CD4-positive, alpha-beta memory T cell (primary cell): ENCODE measurements at regions of chrX and their contacts with region 1.

Region 1: DNA sequence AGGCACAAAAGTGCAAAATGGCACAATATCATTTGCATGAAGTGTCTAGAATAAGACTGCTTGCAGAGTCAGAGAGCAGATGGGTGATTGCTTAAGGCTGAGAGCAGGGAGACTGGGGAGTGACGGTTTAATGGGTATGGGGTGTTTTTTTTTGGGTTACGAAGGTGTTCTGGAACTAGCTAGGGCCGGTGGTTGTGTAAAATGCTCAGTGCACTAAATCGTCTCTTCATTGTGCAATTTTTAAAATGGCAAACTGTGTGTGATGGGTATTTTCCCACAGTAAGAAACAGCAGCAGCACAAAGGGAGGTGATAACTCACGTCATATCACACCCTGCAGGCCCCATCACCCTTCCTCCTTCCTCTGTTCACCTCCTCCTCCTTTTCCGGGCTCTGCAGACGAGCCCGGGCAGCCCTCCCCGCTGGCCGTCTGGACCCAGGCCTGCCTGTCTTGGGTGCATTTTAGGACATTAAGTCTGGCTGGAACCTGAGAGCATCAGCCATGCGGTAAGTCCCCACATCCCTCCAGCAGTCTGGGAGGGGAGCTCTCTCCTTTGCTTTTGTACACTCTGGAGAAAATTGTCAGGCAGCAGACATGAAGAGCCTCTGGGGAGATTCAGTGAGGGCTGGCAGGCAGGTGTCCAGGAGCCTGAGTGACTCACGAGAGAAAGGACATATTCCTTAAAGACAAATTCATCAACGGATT is 42.7 kb downstream of the ASMT start:
- DNase-seq: peak; percentile 46 to 86 (median 64)
- H3K4me3 ChIP-seq: peak overlapping the region; percentile 77 to 89
- H3K4me3 Mint-ChIP-seq: peak overlapping the region; percentile 93 to 98 (median 94)
- H3K27ac ChIP-seq: peak overlapping the region; percentile 82
- H3K27ac Mint-ChIP-seq: peak overlapping the region; percentile 86 to 99 (median 96)
- H3K4me1 ChIP-seq: peaks cover 42% of the 10 kb centered on the region
- H3K4me1 Mint-ChIP-seq: peaks cover 26 to 48% (median 35%) of the 10 kb centered on the region in 4 donors
- H3K27me3 ChIP-seq: no peaks in the 10 kb centered on the region
- H3K27me3 Mint-ChIP-seq: no peaks in the 10 kb centered on the region

Region 2: GRCh38 chrX:1246816-1247215 is 410.7 kb before region 1 on chrX:
- CTCF ChIA-PET with region 1: no interaction called
- POLR2A ChIA-PET with region 1: no interaction called
- intact Hi-C with region 1: loop called (anchors 5 kb)
- DNase-seq: peak; percentile 67 to 78 (median 72)
- H3K4me3 ChIP-seq: no peak overlapping the region
- H3K4me3 Mint-ChIP-seq: peak overlapping the region in 3 of 8 donors; percentile 30 to 80 (median 44)
- H3K27ac ChIP-seq: no peak overlapping the region
- H3K27ac Mint-ChIP-seq: peak overlapping the region in 6 of 7 donors; percentile 37 to 90 (median 75)
- H3K4me1 ChIP-seq: peaks cover 26% of the 10 kb centered on the region
- H3K4me1 Mint-ChIP-seq: peaks cover 16 to 32% (median 23%) of the 10 kb centered on the region in 4 donors
- H3K27me3 ChIP-seq: no peaks in the 10 kb centered on the region
- H3K27me3 Mint-ChIP-seq: no peaks in the 10 kb centered on the region

Region 3: DNA sequence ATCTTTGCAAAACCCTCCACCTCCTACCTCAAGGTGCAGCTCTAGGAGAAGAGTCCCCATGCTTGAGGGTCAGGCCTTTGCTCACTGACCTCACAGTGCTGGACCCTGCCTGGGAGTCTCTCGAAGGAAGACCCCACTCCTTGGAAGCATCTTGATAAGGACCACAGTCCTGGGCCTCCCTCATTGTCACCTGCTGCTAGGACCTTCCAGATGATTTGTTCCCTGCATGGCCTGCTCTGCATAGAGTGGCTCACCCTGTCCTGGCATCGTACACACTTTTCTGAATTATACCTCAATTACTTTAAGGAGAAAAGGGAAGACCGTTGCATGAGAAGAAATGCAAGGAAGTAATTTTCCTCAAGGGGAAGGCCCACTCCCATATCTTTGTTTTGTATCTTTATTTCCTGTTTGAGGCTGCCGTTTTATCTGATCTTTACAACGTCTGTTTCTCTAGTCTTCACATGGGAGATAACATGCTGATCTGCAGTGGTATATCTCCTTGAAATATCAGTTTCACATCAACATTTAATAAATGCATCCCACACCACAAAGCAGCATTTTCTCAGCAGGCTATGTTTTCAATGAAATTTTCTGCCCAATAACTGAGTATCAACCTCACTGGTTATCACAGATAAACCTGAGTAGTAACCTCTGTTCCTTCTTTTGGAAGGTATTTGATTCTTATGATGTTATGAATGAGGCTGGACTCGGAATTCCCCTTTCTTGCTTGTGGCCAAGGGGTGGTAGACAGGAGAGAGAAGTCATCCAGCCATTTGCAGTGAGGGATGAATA is 81.1 kb before region 1 on chrX:
- CTCF ChIA-PET with region 1: no interaction called
- POLR2A ChIA-PET with region 1: no interaction called
- intact Hi-C with region 1: no loop called
- DNase-seq: peak; percentile 29 to 63 (median 49)
- H3K4me3 ChIP-seq: no peak overlapping the region
- H3K4me3 Mint-ChIP-seq: no peak overlapping the region
- H3K27ac ChIP-seq: peak overlapping the region; percentile 28
- H3K27ac Mint-ChIP-seq: no peak overlapping the region
- H3K4me1 ChIP-seq: peaks cover 69% of the 10 kb centered on the region
- H3K4me1 Mint-ChIP-seq: peaks cover 8 to 21% (median 10%) of the 10 kb centered on the region in 4 donors
- H3K27me3 ChIP-seq: no peaks in the 10 kb centered on the region
- H3K27me3 Mint-ChIP-seq: no peaks in the 10 kb centered on the region

Region 4: DNA sequence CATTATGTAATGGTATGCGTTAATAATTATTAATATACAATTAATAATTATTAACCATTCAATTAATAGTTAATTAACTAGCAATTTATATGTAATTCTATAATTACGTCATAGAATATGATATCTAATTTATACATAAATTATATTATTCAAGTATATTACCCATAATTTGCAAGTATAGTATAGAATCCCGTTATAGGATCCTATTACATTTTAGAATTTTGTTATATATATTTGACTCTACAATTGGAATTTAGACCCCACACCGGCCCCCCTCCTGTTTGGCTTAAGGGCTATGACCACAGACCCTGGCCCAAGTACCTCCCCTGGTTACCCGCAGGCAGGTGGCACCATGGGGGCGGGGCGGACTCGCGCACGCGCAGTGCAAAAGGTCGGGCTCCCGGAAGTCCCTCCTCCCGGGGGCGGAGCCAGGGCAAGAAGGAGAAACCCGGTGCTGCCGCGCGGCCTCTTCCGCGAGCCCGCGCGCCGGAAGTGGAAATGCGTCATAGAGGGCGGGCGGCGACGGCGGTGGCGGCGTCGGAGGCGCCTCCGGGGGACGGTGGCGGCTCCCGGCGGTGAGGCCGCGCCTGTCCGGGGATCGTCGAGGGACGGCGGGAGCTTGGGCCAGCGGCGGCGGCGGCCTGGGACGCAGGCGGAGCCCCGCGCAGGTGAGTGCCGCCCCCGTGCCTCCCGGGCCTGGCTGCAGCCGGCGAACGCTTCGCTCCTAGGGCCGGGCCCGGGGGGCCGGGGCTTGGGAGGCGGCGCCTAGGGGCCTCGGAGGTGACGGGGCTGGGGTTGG is 66.2 kb before region 1 on chrX and contains the start of gene AKAP17A:
- CTCF ChIA-PET with region 1: no interaction called
- POLR2A ChIA-PET with region 1: no interaction called
- intact Hi-C with region 1: loop called (anchors 5 kb)
- DNase-seq: peak; percentile 93 to 99 (median 97)
- H3K4me3 ChIP-seq: peak within 1 kb of the TSS; percentile 21 to 77
- H3K4me3 Mint-ChIP-seq: peak within 1 kb of the TSS; percentile 89 to 93 (median 92)
- H3K27ac ChIP-seq: peak within 1 kb of the TSS; percentile 73
- H3K27ac Mint-ChIP-seq: peak within 1 kb of the TSS; percentile 92 to 96 (median 94)
- H3K4me1 ChIP-seq: peaks cover 41% of the 10 kb centered on the region
- H3K4me1 Mint-ChIP-seq: peaks cover 10 to 33% (median 24%) of the 10 kb centered on the region in 4 donors
- H3K27me3 ChIP-seq: no peaks in the 10 kb centered on the region
- H3K27me3 Mint-ChIP-seq: no peaks in the 10 kb centered on the region
- total RNA-seq, gene AKAP17A: 147 to 150 TPM

Region 5: DNA sequence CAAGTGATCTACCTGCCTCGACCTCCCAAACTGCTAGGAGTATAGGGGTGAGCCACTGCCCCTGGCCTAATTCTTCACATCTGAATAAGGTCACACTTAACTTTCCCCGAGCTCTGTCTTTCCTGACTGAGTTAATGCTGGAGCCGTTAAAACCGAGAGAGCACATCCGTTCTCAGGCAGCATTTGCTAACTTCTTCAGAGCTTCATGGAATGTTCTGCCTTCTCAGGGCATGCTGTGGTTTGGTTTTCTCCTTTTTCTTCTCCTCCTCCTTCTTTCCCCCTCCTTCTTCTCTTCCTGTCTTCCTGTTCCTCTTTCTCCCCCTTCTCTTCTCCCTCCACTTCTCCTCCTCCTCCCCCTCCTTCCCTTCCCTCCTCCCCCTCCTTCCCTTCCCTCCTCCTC is 77.3 kb after region 1 on chrX:
- CTCF ChIA-PET with region 1: no interaction called
- POLR2A ChIA-PET with region 1: no interaction called
- intact Hi-C with region 1: no loop called
- DNase-seq: no peak
- H3K4me3 ChIP-seq: no peak overlapping the region
- H3K4me3 Mint-ChIP-seq: no peak overlapping the region
- H3K27ac ChIP-seq: no peak overlapping the region
- H3K27ac Mint-ChIP-seq: no peak overlapping the region
- H3K4me1 ChIP-seq: no peaks in the 10 kb centered on the region
- H3K4me1 Mint-ChIP-seq: no peaks in the 10 kb centered on the region
- H3K27me3 ChIP-seq: no peaks in the 10 kb centered on the region
- H3K27me3 Mint-ChIP-seq: no peaks in the 10 kb centered on the region

Region 6: GRCh38 chrX:2627272-2627867 is 969.9 kb after region 1 on chrX:
- CTCF ChIA-PET with region 1: no interaction called
- POLR2A ChIA-PET with region 1: no interaction called
- intact Hi-C with region 1: loop called (anchors 1 kb)
- DNase-seq: peak in 4 of 5 donors; percentile 32 to 43 (median 38)
- H3K4me3 ChIP-seq: no peak overlapping the region
- H3K4me3 Mint-ChIP-seq: peak overlapping the region in 1 of 8 donors; percentile 17
- H3K27ac ChIP-seq: no peak overlapping the region
- H3K27ac Mint-ChIP-seq: peak overlapping the region in 5 of 7 donors; percentile 48 to 92 (median 65)
- H3K4me1 ChIP-seq: peaks cover 19% of the 10 kb centered on the region
- H3K4me1 Mint-ChIP-seq: peaks cover 31 to 49% (median 38%) of the 10 kb centered on the region in 4 donors
- H3K27me3 ChIP-seq: no peaks in the 10 kb centered on the region
- H3K27me3 Mint-ChIP-seq: no peaks in the 10 kb centered on the region